Sciatic nerve (tissue), 2 donors: ENCODE measurements at regions of chr6 and their contacts with region 1.

Region 1: DNA sequence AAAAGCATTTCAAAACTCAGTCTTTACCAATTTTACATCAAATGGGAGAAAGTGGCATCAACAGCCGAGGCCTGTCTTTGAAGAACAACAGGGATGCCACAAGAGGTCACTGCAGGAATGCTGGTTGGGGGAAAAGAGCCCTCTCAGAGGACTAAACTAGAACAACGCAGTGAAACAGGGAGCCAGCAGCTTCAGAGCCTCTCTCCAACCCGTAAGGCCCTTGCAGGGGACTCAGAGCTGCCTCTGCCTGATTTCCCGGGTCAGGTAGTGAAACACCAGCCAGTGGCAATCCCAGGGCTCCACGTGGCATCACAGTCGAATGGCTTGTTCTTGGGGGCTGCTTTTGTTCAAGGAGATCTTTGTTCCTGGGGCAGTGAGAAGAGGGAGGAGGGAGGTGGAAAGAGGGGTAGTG is 55.0 kb upstream of the KCNK16 start:
- DNase-seq: peak; percentile 78
- ATAC-seq: peak; percentile 96

Region 2: DNA sequence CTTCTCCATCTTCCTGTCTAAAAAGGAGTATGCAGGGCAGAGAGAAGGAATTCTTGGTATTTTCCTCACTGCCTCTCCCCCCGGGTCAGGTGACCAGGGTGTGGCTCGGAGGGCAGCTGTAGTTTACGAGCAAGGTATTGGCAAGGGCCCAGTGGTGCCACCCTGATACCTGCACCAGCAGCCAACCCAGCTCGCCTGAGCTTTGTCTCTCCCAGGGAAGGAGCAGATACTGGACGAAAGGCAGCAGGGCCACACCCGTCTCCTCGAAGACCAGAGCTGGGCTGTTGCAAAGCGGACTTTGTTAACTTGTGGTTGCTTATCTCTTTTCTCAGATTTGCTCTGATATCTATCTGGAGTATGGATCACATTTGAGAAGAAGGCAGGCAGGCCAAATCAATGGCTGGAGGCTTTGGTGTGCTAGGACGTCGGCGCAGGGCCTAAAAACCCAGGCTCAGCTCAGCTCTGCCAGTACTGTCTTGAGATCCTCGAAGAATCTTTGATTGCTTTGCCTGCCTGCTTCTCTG is 173.6 kb before region 1 on chr6:
- intact Hi-C with region 1: no loop called
- DNase-seq: no peak
- ATAC-seq: peak; percentile 13

Region 3: GRCh38 chr6:39870950-39871349 is 493.4 kb after region 1 on chr6:
- intact Hi-C with region 1: loop called (anchors 10 kb)
- DNase-seq: no peak
- ATAC-seq: no peak

Region 4: DNA sequence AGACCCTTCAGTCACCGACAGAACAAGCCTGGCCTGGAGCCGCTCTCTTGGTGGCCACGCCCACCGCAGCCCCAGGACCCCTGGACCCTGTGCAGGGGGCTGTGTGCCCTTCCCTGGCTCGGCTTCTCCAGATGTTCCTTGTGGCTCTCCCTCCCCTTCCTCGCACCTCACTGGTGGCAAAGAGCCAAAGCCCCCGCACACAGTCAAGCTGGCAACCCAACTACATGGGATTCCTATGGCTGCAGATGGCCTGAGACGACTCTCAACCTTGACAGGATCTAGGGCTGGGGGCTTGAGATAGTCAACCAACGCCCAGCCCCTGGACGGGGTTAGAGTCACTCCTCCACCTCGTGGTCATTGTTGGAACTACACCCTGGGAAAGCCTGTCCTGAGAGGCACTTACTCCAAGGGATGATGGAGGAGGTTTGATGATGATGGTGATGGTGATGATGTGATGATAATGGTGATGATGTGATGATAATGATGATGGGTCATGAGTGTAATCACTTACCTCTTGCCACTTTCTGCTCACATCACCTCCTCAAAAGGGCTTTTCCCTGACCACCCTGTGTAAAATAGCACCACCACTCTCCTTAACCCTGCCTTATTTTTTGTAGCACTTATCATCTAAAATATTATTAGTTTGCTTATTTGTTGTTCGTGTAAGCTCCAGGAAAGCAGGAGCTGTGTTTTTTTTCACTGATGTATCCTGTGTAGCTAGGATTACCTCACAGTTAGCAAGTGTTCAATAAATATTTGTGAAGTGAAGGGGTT is 931.2 kb after region 1 on chr6:
- intact Hi-C with region 1: loop called (anchors 10 kb)
- DNase-seq: peak; percentile 80
- ATAC-seq: peak; percentile 85